ENCODE measurements at regions of chr12 and their contacts with region 1.

Region 1: GRCh38 chr12:71846322-71846940 is 6.9 kb downstream of the TBC1D15 start:
- DNase-seq: no peak
- CTCF ChIP-seq: peak; percentile 46

Region 2: GRCh38 chr12:71865166-71865713 is 18.8 kb after region 1 on chr12:
- CTCF ChIA-PET with region 1: interaction called, 5 read pairs
- POLR2A ChIA-PET with region 1: interaction called, 12 read pairs
- DNase-seq: no peak
- CTCF ChIP-seq: no peak

Measured in GM10248 (cell line).